Adrenal gland (tissue), 19 donors: ENCODE measurements at regions of chr1 and their contacts with region 1.

Region 1: GRCh38 chr1:1212780-1213344 is 1.1 kb downstream of the TNFRSF4 start:
- DNase-seq: peak in 3 of 7 donors; percentile 42 to 65 (median 49)
- H3K4me3 ChIP-seq: peak overlapping the region in 1 of 4 donors; percentile 23
- H3K27ac ChIP-seq: peak overlapping the region in 1 of 5 donors; percentile 29
- H3K4me1 ChIP-seq: peaks cover 6% of the 10 kb centered on the region in 2 donors
- H3K27me3 ChIP-seq: no peaks in the 10 kb centered on the region
- CTCF ChIP-seq: no peak
- POLR2A ChIP-seq: no peak

Region 2: DNA sequence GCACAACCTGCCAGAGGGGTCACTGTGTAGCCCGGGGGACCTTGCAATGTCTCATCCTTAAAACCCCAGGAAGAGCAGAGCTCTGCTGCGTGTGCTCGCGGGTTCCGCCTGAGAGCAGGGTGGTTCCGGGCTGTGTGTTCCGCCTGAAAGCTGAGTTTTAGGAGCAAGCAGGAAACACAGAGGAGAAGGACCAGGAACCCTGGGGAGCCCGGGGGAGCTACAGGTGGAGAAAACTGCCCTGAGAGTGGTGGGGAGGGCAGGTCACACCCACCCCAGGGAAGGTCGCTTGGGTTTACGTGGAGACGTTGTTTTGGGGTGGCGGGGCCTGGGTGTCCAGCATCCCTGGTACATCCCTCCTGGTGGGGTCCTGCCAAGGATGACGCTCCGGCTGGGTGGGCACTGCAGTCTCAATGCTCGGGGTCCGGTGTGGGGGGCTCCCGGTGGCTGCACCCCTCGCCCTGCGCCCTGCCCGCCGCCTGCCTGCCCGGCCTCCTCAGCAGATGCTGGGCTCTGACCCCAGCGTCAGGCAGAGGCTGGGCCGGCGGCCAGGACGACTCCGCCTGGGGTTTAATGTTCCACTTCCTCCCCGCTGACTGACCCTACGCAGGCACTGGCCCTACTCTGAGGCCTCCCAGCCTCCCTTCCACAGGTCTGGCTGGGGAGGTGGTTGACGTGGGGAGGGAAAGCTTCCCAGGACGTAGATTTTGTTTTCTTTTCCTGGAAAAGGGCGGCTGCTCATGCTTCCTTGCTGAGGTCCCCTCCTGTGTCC is 79.7 kb before region 1 on chr1:
- intact Hi-C with region 1: loop called in 1 of 2 experiments (anchors 5 kb)
- DNase-seq: peak in 1 of 7 donors; percentile 34
- H3K4me3 ChIP-seq: no peak overlapping the region
- H3K27ac ChIP-seq: no peak overlapping the region
- H3K4me1 ChIP-seq: no peaks in the 10 kb centered on the region
- H3K27me3 ChIP-seq: peaks cover 12% of the 10 kb centered on the region
- CTCF ChIP-seq: no peak
- POLR2A ChIP-seq: no peak